Naive thymus-derived CD4-positive, alpha-beta T cell (primary cell): ENCODE measurements at regions of chr12 and their contacts with region 1.

Region 1: GRCh38 chr12:7018350-7019042 is at the start of gene LPCAT3:
- DNase-seq: peak; percentile 93 to 99 (median 98)
- ATAC-seq: peak; percentile 97
- H3K4me3 ChIP-seq: peak within 1 kb of the TSS; percentile 95
- H3K4me3 Mint-ChIP-seq: peak within 1 kb of the TSS; percentile 84 to 100 (median 94)
- H3K27ac ChIP-seq: peak within 1 kb of the TSS; percentile 89
- H3K27ac Mint-ChIP-seq: peak within 1 kb of the TSS; percentile 75 to 96 (median 93)
- H3K4me1 ChIP-seq: peaks cover 11 to 12% of the 10 kb centered on the region in 2 donors
- H3K4me1 Mint-ChIP-seq: peaks cover 25 to 46% (median 41%) of the 10 kb centered on the region in 7 donors
- H3K27me3 ChIP-seq: no peaks in the 10 kb centered on the region
- H3K27me3 Mint-ChIP-seq: no peaks in the 10 kb centered on the region
- total RNA-seq, gene LPCAT3: 16.7 to 37.9 (median 27.1) TPM

Region 2: GRCh38 chr12:6867413-6868210 is 150.9 kb before region 1 on chr12 and contains the start of gene TPI1:
- CTCF ChIA-PET with region 1: interaction called, 3 read pairs
- POLR2A ChIA-PET with region 1: interaction called, 9 read pairs
- intact Hi-C with region 1: loop called in 1 of 2 experiments (anchors 1 kb)
- DNase-seq: peak; percentile 40 to 87 (median 52)
- ATAC-seq: peak; percentile 88
- H3K4me3 ChIP-seq: peak within 1 kb of the TSS; percentile 61
- H3K4me3 Mint-ChIP-seq: peak within 1 kb of the TSS; percentile 87 to 93 (median 91)
- H3K27ac ChIP-seq: peak within 1 kb of the TSS; percentile 82
- H3K27ac Mint-ChIP-seq: peak within 1 kb of the TSS; percentile 76 to 95 (median 87)
- H3K4me1 ChIP-seq: peaks cover 38 to 39% of the 10 kb centered on the region in 2 donors
- H3K4me1 Mint-ChIP-seq: peaks cover 34 to 55% (median 44%) of the 10 kb centered on the region in 7 donors
- H3K27me3 ChIP-seq: no peaks in the 10 kb centered on the region
- H3K27me3 Mint-ChIP-seq: no peaks in the 10 kb centered on the region
- total RNA-seq, gene TPI1: 89.7 to 1,293 (median 134) TPM

Region 3: GRCh38 chr12:6927379-6928024 is 91.0 kb before region 1 on chr12 and contains the start of gene ATN1:
- CTCF ChIA-PET with region 1: interaction called, 7 read pairs
- POLR2A ChIA-PET with region 1: interaction called, 4 read pairs
- intact Hi-C with region 1: loop called (anchors 1 kb)
- DNase-seq: peak in 5 of 9 donors; percentile 41 to 66 (median 43)
- ATAC-seq: peak; percentile 35
- H3K4me3 ChIP-seq: peak within 1 kb of the TSS; percentile 64
- H3K4me3 Mint-ChIP-seq: peak within 1 kb of the TSS; percentile 85 to 99 (median 92)
- H3K27ac ChIP-seq: peak within 1 kb of the TSS; percentile 86
- H3K27ac Mint-ChIP-seq: peak within 1 kb of the TSS; percentile 88 to 98 (median 95)
- H3K4me1 ChIP-seq: peaks cover 16 to 37% of the 10 kb centered on the region in 2 donors
- H3K4me1 Mint-ChIP-seq: peaks cover 38 to 69% (median 56%) of the 10 kb centered on the region in 7 donors
- H3K27me3 ChIP-seq: no peaks in the 10 kb centered on the region
- H3K27me3 Mint-ChIP-seq: no peaks in the 10 kb centered on the region
- total RNA-seq, gene ATN1: 29.5 to 42.2 (median 34.4) TPM

Region 4: DNA sequence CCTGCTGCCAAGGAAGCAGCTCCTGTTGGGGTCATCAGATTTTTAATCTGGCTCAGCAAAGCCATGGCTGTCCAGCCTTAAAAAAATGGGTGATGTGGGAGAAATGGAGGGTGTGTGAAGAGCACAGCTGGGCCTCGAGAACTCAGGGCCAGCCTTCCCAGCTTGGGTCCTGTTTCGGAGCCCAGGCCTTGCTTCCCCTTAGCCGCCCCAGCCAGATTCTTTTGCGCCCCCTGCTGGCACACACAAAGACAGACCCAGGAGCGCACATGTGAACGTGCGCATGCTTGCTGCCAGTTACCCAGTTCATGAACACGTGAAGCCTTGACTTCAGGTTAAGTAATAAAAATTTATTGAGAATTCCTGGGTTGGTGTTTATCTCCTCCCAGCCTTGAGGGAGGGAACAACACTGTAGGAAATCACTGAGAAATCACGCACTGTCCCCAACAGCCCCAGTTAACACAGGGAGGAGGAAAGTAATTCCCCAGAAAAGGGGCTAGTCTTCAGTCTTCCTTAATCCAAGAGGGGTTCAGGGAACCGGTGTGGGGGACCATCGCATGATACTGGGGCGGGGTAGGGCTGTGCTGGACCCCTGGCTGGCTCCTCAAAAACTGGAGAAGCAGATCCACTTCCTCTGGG is 53.4 kb before region 1 on chr12:
- CTCF ChIA-PET with region 1: interaction called, 3 read pairs
- POLR2A ChIA-PET with region 1: interaction called, 3 read pairs
- intact Hi-C with region 1: loop called (anchors 1 kb)
- DNase-seq: peak; percentile 77 to 89 (median 85)
- ATAC-seq: peak; percentile 69
- H3K4me3 ChIP-seq: no peak overlapping the region
- H3K4me3 Mint-ChIP-seq: peak overlapping the region in 3 of 10 donors; percentile 9 to 23 (median 17)
- H3K27ac ChIP-seq: peak overlapping the region; percentile 68
- H3K27ac Mint-ChIP-seq: peak overlapping the region; percentile 75 to 95 (median 87)
- H3K4me1 ChIP-seq: peaks cover 45 to 60% of the 10 kb centered on the region in 2 donors
- H3K4me1 Mint-ChIP-seq: peaks cover 33 to 59% (median 56%) of the 10 kb centered on the region in 7 donors
- H3K27me3 ChIP-seq: no peaks in the 10 kb centered on the region
- H3K27me3 Mint-ChIP-seq: no peaks in the 10 kb centered on the region

Region 5: DNA sequence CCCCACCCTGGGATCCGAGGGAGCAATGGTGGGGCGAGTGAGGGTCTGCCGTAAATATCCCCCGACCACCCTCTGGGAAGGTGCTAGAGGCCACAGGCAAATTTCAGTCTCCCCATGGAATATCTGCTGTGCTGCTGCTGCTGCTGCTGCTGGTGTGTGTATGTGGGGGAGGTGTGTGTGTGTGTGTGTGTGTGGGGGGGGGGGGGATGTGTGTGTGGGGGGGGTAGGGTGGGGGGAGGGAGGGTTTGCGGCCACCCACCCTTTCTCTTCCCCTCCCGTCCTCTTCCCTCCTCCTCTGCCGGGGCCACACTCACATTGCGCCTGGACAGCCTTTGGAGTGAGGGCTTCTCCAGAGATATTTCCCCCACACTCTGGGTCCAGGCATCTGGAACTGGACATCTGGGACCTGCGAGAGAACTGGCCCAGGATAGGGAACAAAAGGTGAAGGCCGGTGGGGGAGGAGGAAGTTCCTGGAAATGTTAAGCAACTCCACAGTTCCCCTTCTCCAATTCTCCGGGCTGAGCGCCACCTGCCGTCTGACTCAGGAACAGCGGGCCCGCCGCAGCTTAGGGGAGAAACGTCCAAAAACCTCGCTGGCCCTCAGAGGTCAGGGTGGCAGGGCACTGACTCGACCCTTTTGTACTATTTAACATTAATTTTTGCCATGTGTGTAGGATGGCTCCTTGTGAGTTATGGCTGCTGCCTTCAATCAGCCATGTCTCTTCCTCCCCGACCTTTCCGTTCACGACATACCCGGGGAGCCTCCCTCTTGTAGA is 90.5 kb after region 1 on chr12 and contains the start of gene C1RL:
- CTCF ChIA-PET with region 1: interaction called, 5 read pairs
- POLR2A ChIA-PET with region 1: interaction called, 4 read pairs
- intact Hi-C with region 1: loop called (anchors 1 kb)
- DNase-seq: peak; percentile 50 to 88 (median 65)
- ATAC-seq: peak; percentile 69
- H3K4me3 ChIP-seq: peak within 1 kb of the TSS; percentile 95
- H3K4me3 Mint-ChIP-seq: peak within 1 kb of the TSS; percentile 90 to 98 (median 94)
- H3K27ac ChIP-seq: peak within 1 kb of the TSS; percentile 79
- H3K27ac Mint-ChIP-seq: peak within 1 kb of the TSS; percentile 84 to 95 (median 93)
- H3K4me1 ChIP-seq: peaks cover 6% of the 10 kb centered on the region in 2 donors
- H3K4me1 Mint-ChIP-seq: peaks cover 29 to 64% (median 43%) of the 10 kb centered on the region in 7 donors
- H3K27me3 ChIP-seq: no peaks in the 10 kb centered on the region
- H3K27me3 Mint-ChIP-seq: no peaks in the 10 kb centered on the region
- total RNA-seq, gene C1RL: 18.5 to 38.6 (median 24.4) TPM